H1 (cell line): ENCODE measurements at regions of chr3 and their contacts with region 1.

Region 1: GRCh38 chr3:151146071-151146730 is 56.8 kb downstream of the GPR171 start:
- DNase-seq: peak; percentile 63 to 78
- H3K4me3 ChIP-seq: no peak overlapping the region; a peak in 1 of 8 replicates
- H3K27ac ChIP-seq: no peak overlapping the region
- H3K4me1 ChIP-seq: peaks cover 2 to 14% (median 8%) of the 10 kb centered on the region in 4 experiments; a peak in 6 of 7 replicates
- H3K27me3 ChIP-seq: no peaks in the 10 kb centered on the region
- CTCF ChIP-seq: peak; percentile 82 to 96 (median 95)
- EP300 ChIP-seq: no peak
- POLR2A ChIP-seq: no peak
- RAD21 ChIP-seq: peak; percentile 95

Region 2: GRCh38 chr3:150925751-150926201 is 220.4 kb before region 1 on chr3:
- CTCF ChIA-PET with region 1: interaction called, 23 read pairs
- POLR2A ChIA-PET with region 1: no interaction called
- DNase-seq: peak; percentile 61 to 80
- H3K4me3 ChIP-seq: no peak overlapping the region; a peak in 1 of 8 replicates
- H3K27ac ChIP-seq: no peak overlapping the region
- H3K4me1 ChIP-seq: peaks cover 2 to 4% (median 3%) of the 10 kb centered on the region in 4 experiments; a peak in 4 of 7 replicates
- H3K27me3 ChIP-seq: no peaks in the 10 kb centered on the region
- CTCF ChIP-seq: peak; percentile 70 to 80 (median 76)
- EP300 ChIP-seq: no peak
- POLR2A ChIP-seq: no peak
- RAD21 ChIP-seq: peak; percentile 77 to 81

Region 3: GRCh38 chr3:151008699-151009098 is 137.5 kb before region 1 on chr3:
- CTCF ChIA-PET with region 1: interaction called, 29 read pairs
- POLR2A ChIA-PET with region 1: no interaction called
- DNase-seq: no peak
- H3K4me3 ChIP-seq: no peak overlapping the region
- H3K27ac ChIP-seq: no peak overlapping the region
- H3K4me1 ChIP-seq: peaks cover 0 to 2% (median 0%) of the 10 kb centered on the region in 4 experiments; a peak in 1 of 7 replicates
- H3K27me3 ChIP-seq: no peaks in the 10 kb centered on the region
- CTCF ChIP-seq: peak in 1 of 3 experiments; percentile 32; a peak in 2 of 4 replicates
- EP300 ChIP-seq: no peak
- POLR2A ChIP-seq: no peak
- RAD21 ChIP-seq: peak; percentile 68 to 76

Region 4: GRCh38 chr3:151067158-151067557 is 79.0 kb before region 1 on chr3:
- CTCF ChIA-PET with region 1: interaction called, 99 read pairs
- POLR2A ChIA-PET with region 1: no interaction called
- DNase-seq: peak in 1 of 2 experiments; percentile 53
- H3K4me3 ChIP-seq: no peak overlapping the region
- H3K27ac ChIP-seq: no peak overlapping the region
- H3K4me1 ChIP-seq: no peaks in the 10 kb centered on the region
- H3K27me3 ChIP-seq: peaks cover 0 to 1% (median 0%) of the 10 kb centered on the region in 4 experiments; a peak in 1 of 7 replicates
- CTCF ChIP-seq: peak in 2 of 3 experiments; percentile 68 to 77; a peak in 3 of 4 replicates
- EP300 ChIP-seq: no peak
- POLR2A ChIP-seq: no peak
- RAD21 ChIP-seq: peak; percentile 77 to 83

Region 5: GRCh38 chr3:151093905-151094304 is 52.3 kb before region 1 on chr3:
- CTCF ChIA-PET with region 1: interaction called, 29 read pairs
- POLR2A ChIA-PET with region 1: no interaction called
- DNase-seq: no peak
- H3K4me3 ChIP-seq: no peak overlapping the region
- H3K27ac ChIP-seq: no peak overlapping the region
- H3K4me1 ChIP-seq: peaks cover 0 to 11% (median 5%) of the 10 kb centered on the region in 4 experiments; a peak in 4 of 7 replicates
- H3K27me3 ChIP-seq: no peaks in the 10 kb centered on the region
- CTCF ChIP-seq: peak in 1 of 3 experiments; percentile 5; a peak in 1 of 4 replicates
- EP300 ChIP-seq: no peak
- POLR2A ChIP-seq: no peak
- RAD21 ChIP-seq: no peak

Region 6: GRCh38 chr3:151135541-151136337 is 10.5 kb before region 1 on chr3:
- CTCF ChIA-PET with region 1: interaction called, 16 read pairs
- POLR2A ChIA-PET with region 1: interaction called, 3 read pairs
- DNase-seq: no peak
- H3K4me3 ChIP-seq: no peak overlapping the region
- H3K27ac ChIP-seq: no peak overlapping the region
- H3K4me1 ChIP-seq: peaks cover 0 to 2% (median 0%) of the 10 kb centered on the region in 4 experiments; a peak in 1 of 7 replicates
- H3K27me3 ChIP-seq: no peaks in the 10 kb centered on the region
- CTCF ChIP-seq: no peak
- EP300 ChIP-seq: no peak
- POLR2A ChIP-seq: no peak
- RAD21 ChIP-seq: no peak

Region 7: GRCh38 chr3:151156618-151157216 is 10.5 kb after region 1 on chr3:
- CTCF ChIA-PET with region 1: interaction called, 16 read pairs
- POLR2A ChIA-PET with region 1: no interaction called
- DNase-seq: no peak
- H3K4me3 ChIP-seq: no peak overlapping the region
- H3K27ac ChIP-seq: no peak overlapping the region
- H3K4me1 ChIP-seq: peaks cover 0 to 5% (median 3%) of the 10 kb centered on the region in 4 experiments; a peak in 4 of 7 replicates
- H3K27me3 ChIP-seq: no peaks in the 10 kb centered on the region
- CTCF ChIP-seq: peak in 2 of 3 experiments; percentile 40 to 66; a peak in 2 of 4 replicates
- EP300 ChIP-seq: no peak
- POLR2A ChIP-seq: no peak
- RAD21 ChIP-seq: peak; percentile 22 to 31

Region 8: DNA sequence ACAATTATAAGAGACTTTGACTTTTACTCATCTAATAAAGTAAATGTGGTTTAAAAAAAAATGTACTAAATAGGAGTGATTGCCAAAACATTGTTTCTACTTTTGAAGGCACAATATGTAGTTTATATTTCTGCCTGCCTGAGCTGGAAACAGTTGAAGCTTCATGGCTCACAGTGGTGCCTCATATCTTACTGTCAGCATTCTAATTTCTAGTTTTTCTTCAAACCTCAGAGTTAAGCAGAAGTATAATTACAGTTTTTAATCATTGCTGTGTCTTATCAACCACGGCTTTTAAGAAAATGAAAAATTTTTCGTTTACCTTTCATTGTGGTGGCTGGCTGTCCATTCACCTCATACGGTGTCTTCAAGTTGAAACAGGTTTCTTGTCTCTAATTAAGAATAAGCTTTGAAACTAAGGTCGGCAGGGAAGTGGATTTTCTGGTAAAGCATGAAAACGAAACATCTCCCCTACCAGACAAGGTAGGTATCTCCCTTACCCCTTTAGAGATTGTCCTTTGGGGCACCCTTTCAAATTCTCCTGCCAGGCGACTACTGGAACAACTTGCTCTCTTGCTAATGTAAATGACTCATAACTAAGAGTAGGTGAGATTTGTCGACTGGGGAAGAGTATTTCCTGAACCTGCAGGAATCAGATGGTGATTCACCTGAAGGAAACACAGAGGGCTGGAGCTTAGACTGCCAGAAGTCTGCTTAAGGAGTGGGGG is 170.2 kb after region 1 on chr3 and contains the start of gene GPR87:
- CTCF ChIA-PET with region 1: no interaction called
- POLR2A ChIA-PET with region 1: no interaction called
- DNase-seq: no peak
- H3K4me3 ChIP-seq: no peak within 1 kb of the TSS
- H3K27ac ChIP-seq: no peak within 1 kb of the TSS; the same call in 1 of the 2 replicates
- H3K4me1 ChIP-seq: peaks cover 3 to 12% (median 6%) of the 10 kb centered on the region in 4 experiments; a peak in 4 of 7 replicates
- H3K27me3 ChIP-seq: no peaks in the 10 kb centered on the region
- CTCF ChIP-seq: no peak
- EP300 ChIP-seq: no peak
- POLR2A ChIP-seq: no peak
- RAD21 ChIP-seq: no peak
- total RNA-seq, gene GPR87: not detected in 2 replicates